Mammary epithelial cell (primary cell): ENCODE measurements at regions of chr22 and their contacts with region 1.

Region 1: GRCh38 chr22:46335201-46336118 is at the start of gene TRMU:
- DNase-seq: peak; percentile 81
- H3K4me3 ChIP-seq: peak within 1 kb of the TSS; percentile 68 to 96 (median 87)
- H3K27ac ChIP-seq: peak within 1 kb of the TSS; percentile 40
- H3K4me1 ChIP-seq: peaks cover 10% of the 10 kb centered on the region
- H3K27me3 ChIP-seq: no peaks in the 10 kb centered on the region
- CTCF ChIP-seq: no peak
- total RNA-seq, gene TRMU: 16.3 to 42.0 TPM

Region 2: GRCh38 chr22:46129390-46130041 is 205.9 kb before region 1 on chr22:
- CTCF ChIA-PET with region 1: no interaction called
- dilution Hi-C with region 1: loop called (anchors 5 kb)
- in situ Hi-C with region 1: no loop called
- intact Hi-C with region 1: no loop called
- DNase-seq: no peak
- H3K4me3 ChIP-seq: no peak overlapping the region
- H3K27ac ChIP-seq: no peak overlapping the region
- H3K4me1 ChIP-seq: no peaks in the 10 kb centered on the region
- H3K27me3 ChIP-seq: no peaks in the 10 kb centered on the region
- CTCF ChIP-seq: no peak

Region 3: DNA sequence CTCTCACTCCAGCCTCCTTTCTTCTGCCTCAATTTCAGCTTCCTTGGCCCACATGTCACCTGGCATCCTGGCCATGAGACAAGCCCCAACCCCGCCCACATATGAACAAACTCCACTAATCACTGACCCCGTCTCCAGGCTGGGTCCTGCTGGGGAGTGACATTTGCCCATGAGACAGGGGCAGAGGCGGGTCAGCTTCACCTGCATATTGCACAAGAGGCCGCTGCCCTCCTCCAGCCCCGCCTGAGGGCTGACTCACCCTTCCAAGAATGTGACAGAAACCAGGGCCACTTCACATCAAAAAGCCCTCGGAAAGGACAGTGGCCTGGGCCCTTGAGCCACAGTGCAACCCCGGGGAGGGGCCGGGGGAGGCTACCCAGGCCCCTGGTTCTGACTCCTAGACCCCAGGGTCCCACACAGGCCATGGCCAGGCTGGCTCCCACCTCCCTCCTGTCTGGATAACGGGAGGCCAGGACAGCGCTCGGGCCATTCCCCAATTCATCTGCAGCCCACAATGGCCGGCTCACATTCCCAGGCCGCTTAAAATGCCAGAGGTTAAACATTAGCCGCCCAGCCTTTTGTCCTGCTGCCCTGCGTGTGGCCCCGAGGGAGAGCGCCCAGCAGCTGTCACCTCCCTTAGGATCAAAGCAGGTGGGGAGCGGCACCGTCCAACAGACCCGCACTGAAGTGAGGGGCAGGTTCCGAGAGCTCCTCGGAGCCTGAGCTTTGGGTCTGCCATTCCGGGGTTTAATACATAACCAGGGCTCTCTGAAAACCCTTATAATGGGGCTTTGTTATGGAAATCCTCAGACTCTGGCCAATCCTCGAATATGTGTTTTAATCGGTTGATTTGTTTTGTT is 42.3 kb after region 1 on chr22:
- CTCF ChIA-PET with region 1: no interaction called
- dilution Hi-C with region 1: no loop called
- in situ Hi-C with region 1: no loop called
- intact Hi-C with region 1: no loop called
- DNase-seq: peak; percentile 63
- H3K4me3 ChIP-seq: no peak overlapping the region
- H3K27ac ChIP-seq: no peak overlapping the region
- H3K4me1 ChIP-seq: peaks cover 9% of the 10 kb centered on the region
- H3K27me3 ChIP-seq: no peaks in the 10 kb centered on the region
- CTCF ChIP-seq: no peak

Region 4: DNA sequence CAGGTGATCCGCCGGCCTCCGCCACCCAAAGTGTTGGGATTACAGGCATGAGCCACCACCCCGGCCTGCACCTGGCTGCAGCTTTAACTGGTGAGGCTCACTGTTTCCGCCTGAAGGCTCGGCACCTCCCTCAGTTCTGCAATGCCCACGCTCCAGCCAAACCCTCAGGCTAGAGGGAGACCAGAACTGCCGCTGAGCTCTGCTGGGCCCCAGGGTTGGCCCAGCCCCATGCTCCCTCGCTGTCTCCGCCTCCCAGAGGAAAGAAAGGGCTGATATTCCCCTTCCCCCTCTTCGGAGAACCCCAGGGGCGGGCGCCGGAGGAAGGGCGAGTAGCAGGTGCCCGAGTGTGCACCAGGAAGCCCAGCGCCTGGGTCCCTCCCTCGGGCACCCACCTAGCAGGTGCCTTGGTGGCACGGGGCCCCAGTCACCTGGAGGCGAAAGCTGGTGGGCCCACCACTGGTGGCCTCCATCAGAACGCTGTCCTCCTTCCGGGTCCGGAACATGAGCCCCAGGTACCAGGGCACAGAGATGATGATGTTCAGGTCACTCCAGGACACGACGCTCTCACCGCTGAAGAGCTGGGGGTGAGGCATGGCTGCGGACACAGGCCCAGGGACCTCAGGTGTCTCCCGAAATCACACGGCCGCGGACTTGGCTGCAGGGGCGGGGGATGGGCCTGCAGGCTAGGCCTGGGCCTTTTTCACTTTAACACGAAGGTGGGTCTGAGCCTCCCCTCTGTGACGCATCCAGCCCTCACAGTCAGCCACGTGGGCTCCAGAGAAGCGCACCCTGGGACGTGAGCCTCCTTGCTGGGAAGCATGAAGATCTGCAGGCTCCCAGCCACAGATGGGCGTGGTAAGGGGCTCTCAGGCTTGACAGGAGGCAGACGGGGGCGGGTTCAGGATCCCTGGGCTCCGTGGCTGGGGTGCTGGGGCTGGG is 73.4 kb after region 1 on chr22:
- CTCF ChIA-PET with region 1: no interaction called
- dilution Hi-C with region 1: loop called (anchors 10 kb)
- in situ Hi-C with region 1: no loop called
- intact Hi-C with region 1: no loop called
- DNase-seq: no peak
- H3K4me3 ChIP-seq: no peak overlapping the region
- H3K27ac ChIP-seq: no peak overlapping the region
- H3K4me1 ChIP-seq: no peaks in the 10 kb centered on the region
- H3K27me3 ChIP-seq: no peaks in the 10 kb centered on the region
- CTCF ChIP-seq: no peak

Region 5: GRCh38 chr22:46432164-46433068 is 97.0 kb after region 1 on chr22:
- CTCF ChIA-PET with region 1: no interaction called
- dilution Hi-C with region 1: loop called (anchors 5 kb)
- in situ Hi-C with region 1: no loop called
- intact Hi-C with region 1: no loop called
- DNase-seq: no peak
- H3K4me3 ChIP-seq: no peak overlapping the region
- H3K27ac ChIP-seq: no peak overlapping the region
- H3K4me1 ChIP-seq: peaks cover 4% of the 10 kb centered on the region
- H3K27me3 ChIP-seq: no peaks in the 10 kb centered on the region
- CTCF ChIP-seq: no peak

Region 6: GRCh38 chr22:46587492-46588278 is 252.2 kb after region 1 on chr22:
- CTCF ChIA-PET with region 1: no interaction called
- dilution Hi-C with region 1: loop called (anchors 10 kb)
- in situ Hi-C with region 1: no loop called
- intact Hi-C with region 1: no loop called
- DNase-seq: no peak
- H3K4me3 ChIP-seq: no peak overlapping the region
- H3K27ac ChIP-seq: no peak overlapping the region
- H3K4me1 ChIP-seq: peaks cover 9% of the 10 kb centered on the region
- H3K27me3 ChIP-seq: no peaks in the 10 kb centered on the region
- CTCF ChIP-seq: no peak